Dendritic cell treated with granulocyte-macrophage colony-stimulating factor and Interleukin-4, amounts not matched to agents 40 ng/mL and 50 ng/mL, for 4 days (primary cell): ENCODE measurements at regions of chr2 and their contacts with region 1.

Region 1: DNA sequence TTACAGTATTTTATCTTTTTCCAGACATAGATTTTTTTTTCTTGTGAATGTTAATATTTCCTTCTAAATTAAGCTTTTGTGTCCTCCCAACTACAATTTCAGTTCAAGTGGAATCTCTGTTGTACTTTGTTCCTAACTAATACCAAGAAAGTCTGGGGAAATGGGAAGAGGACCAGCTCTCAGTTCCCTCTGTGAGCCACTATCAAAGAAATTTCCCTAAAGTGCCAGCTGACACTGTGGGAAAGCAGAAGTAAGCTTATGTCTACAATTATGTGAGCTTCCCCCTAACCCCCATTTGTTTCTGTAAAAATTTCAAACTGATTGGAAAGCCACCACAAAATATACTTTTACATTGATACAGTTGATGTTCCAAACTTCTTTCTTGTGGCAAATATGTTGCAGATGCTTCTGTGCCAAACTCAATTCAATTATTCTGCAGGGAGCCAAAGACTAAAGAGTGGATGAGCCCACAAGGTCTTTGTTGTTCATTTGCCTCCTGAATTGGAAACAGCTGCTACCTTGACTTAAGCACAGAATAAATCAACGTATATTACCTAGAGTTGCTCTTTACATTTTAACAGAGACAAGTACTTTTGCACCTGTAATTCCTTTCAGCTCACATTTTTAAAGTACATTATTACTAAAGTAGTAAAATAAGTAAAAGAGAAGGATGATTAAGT is 306.6 kb downstream of the PTH2R start:
- H3K4me3 Mint-ChIP-seq: no peak overlapping the region
- H3K27ac Mint-ChIP-seq: peak overlapping the region; percentile 69
- H3K4me1 Mint-ChIP-seq: peaks cover 17% of the 10 kb centered on the region
- H3K27me3 Mint-ChIP-seq: no peaks in the 10 kb centered on the region

Region 2: GRCh38 chr2:208654056-208654455 is 59.1 kb before region 1 on chr2:
- intact Hi-C with region 1: loop called (anchors 5 kb)
- H3K4me3 Mint-ChIP-seq: no peak overlapping the region
- H3K27ac Mint-ChIP-seq: no peak overlapping the region
- H3K4me1 Mint-ChIP-seq: peaks cover 6% of the 10 kb centered on the region
- H3K27me3 Mint-ChIP-seq: no peaks in the 10 kb centered on the region

Region 3: GRCh38 chr2:208738536-208738935 is 25.3 kb after region 1 on chr2:
- intact Hi-C with region 1: no loop called
- H3K4me3 Mint-ChIP-seq: no peak overlapping the region
- H3K27ac Mint-ChIP-seq: no peak overlapping the region
- H3K4me1 Mint-ChIP-seq: no peaks in the 10 kb centered on the region
- H3K27me3 Mint-ChIP-seq: no peaks in the 10 kb centered on the region

Region 4: GRCh38 chr2:208798710-208799109 is 85.5 kb after region 1 on chr2:
- intact Hi-C with region 1: no loop called
- H3K4me3 Mint-ChIP-seq: no peak overlapping the region
- H3K27ac Mint-ChIP-seq: no peak overlapping the region
- H3K4me1 Mint-ChIP-seq: no peaks in the 10 kb centered on the region
- H3K27me3 Mint-ChIP-seq: no peaks in the 10 kb centered on the region